ENCODE measurements at regions of chr3 and their contacts with region 1.

Region 1: DNA sequence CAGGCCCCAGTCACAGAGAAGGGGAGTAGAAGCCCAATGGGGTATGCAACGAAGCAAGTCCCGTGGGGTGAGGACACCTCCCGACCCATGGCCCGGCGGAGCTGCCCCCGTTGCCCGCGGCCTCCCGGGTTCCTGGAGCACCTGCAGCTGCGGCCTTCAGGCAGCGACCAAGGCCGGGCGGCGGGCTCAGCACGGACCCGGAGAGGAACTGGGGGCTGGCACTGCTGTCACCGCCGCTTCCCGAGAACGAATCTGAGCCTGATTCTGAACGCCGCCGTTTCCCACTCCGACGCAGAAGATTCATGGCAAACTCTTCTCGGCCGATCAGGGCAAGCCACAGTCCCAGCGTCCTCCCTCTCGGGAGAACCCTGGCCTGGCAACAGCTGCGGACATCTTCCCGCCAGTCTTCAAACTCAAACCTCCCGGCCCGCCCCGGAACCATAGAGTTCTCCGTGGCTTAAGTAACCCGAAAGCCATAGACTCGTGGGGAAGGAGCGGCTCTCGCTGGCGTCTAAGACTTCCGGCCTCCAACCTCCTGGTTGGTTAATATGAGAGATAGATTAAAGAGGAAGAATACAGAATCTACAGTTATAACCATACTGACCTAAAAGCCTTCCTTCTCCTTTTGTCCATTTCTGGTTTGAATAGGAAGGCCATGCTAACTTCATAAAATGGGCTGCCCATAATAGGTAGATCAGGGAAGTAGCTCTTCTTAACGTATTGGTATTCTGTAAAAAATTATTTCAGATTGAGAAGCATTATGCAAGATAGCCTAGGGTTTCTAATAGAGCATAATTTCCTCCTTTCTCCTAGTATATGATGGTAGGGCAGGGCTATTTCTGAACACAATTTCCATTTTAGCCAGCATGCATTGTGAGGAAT is at the start of gene POLQ:
- DNase-seq: peak; percentile 77
- ATAC-seq: peak; percentile 82
- H3K4me3 ChIP-seq: peak within 1 kb of the TSS; percentile 76
- H3K27ac ChIP-seq: peak within 1 kb of the TSS; percentile 84
- H3K4me1 ChIP-seq: peaks cover 16% of the 10 kb centered on the region
- H3K27me3 ChIP-seq: no peaks in the 10 kb centered on the region
- CTCF ChIP-seq: no peak
- EP300 ChIP-seq: 0 out of 4 replicates have a peak, but pooled peaks of 1 of the 2 experiments have one; percentile 18
- POLR2A ChIP-seq: peak; percentile 83
- RAD21 ChIP-seq: no peak
- polyA plus RNA-seq, gene POLQ: 3.3 to 3.4 TPM

Region 2: DNA sequence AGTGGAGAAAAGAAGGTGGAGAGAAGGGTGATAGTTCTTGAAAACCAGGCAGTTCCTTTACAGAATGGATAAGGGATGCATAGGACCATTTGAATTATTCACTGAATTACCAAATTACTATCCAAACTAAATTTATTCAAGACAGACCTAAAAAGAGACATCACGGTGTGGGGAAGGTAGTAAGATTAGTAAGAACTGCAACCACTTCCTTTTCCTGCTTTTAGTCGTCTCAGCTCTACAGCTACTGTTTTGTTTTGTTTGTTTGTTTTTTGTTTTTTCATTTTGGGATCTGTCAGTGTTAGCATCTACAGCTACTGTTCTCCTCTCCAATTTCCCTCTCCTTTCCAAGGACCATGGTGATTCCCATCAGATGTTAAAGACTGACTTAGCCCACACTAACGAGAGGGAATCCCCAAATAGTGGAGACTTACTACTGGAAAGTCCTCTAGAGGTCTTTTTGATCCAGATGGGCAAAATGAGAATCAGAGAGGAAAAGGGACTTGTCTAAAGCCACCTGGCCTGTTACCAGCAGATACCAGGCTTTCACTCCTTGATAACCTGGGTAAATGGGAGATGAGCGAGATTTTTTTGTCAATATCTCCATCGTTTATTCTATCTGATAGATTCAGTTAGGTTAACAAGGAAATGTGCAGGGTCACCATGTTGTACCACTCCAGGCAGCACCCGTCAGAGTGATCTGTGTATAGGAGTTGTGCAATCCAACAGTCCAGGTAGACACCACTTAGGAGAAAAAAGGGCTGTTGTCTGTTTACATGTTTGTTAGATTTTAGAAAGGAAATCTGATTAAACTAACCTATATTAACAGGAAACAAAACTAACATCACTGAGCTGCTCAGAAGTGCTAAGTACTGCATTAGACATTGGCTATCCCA is 108.9 kb after region 1 on chr3:
- CTCF ChIA-PET with region 1: interaction called, 5 read pairs
- POLR2A ChIA-PET with region 1: interaction called, 4 read pairs
- RAD21 ChIA-PET with region 1: interaction called, 3 read pairs
- SMC1A ChIA-PET with region 1: interaction called, 18 read pairs
- in situ Hi-C with region 1: no loop called
- intact Hi-C with region 1: loop called (anchors 2 kb)
- DNase-seq: peak; percentile 36
- ATAC-seq: peak; percentile 89
- H3K4me3 ChIP-seq: peak overlapping the region; percentile 12; the same call in 1 of the 2 replicates
- H3K27ac ChIP-seq: peak overlapping the region; percentile 68; the same call in 1 of the 2 replicates
- H3K4me1 ChIP-seq: peaks cover 34% of the 10 kb centered on the region
- H3K27me3 ChIP-seq: no peaks in the 10 kb centered on the region
- CTCF ChIP-seq: no peak
- EP300 ChIP-seq: 0 out of 4 replicates have a peak, but pooled peaks have one; percentile 16 to 21
- POLR2A ChIP-seq: no peak
- RAD21 ChIP-seq: no peak

Region 3: DNA sequence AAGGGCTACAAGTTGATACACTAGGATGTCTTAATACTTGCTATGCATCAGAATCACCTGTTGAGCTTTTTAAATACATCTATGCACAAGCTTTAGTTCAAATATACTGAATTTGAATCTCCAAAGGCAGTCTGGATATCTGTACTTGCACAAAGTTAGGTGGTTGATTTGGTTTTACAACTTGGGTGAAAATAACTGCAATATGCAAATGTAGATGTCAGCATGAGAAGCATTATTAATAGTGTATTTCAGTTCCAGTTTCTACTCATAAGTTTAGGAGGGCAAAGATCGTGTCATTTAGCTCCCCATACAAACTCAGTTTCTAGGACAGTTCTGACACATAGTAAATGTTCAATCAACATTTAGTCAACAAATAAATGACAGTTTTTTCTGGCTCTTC is 263.4 kb after region 1 on chr3:
- CTCF ChIA-PET with region 1: no interaction called
- POLR2A ChIA-PET with region 1: no interaction called
- RAD21 ChIA-PET with region 1: interaction called, 3 read pairs
- SMC1A ChIA-PET with region 1: interaction called, 4 read pairs
- in situ Hi-C with region 1: no loop called
- intact Hi-C with region 1: loop called (anchors 5 kb)
- DNase-seq: peak; percentile 84
- ATAC-seq: peak; percentile 99
- H3K4me3 ChIP-seq: no peak overlapping the region
- H3K27ac ChIP-seq: peak overlapping the region; percentile 81
- H3K4me1 ChIP-seq: peaks cover 26% of the 10 kb centered on the region
- H3K27me3 ChIP-seq: no peaks in the 10 kb centered on the region
- CTCF ChIP-seq: no peak
- EP300 ChIP-seq: peak; percentile 75 to 87
- POLR2A ChIP-seq: no peak
- RAD21 ChIP-seq: no peak

Region 4: DNA sequence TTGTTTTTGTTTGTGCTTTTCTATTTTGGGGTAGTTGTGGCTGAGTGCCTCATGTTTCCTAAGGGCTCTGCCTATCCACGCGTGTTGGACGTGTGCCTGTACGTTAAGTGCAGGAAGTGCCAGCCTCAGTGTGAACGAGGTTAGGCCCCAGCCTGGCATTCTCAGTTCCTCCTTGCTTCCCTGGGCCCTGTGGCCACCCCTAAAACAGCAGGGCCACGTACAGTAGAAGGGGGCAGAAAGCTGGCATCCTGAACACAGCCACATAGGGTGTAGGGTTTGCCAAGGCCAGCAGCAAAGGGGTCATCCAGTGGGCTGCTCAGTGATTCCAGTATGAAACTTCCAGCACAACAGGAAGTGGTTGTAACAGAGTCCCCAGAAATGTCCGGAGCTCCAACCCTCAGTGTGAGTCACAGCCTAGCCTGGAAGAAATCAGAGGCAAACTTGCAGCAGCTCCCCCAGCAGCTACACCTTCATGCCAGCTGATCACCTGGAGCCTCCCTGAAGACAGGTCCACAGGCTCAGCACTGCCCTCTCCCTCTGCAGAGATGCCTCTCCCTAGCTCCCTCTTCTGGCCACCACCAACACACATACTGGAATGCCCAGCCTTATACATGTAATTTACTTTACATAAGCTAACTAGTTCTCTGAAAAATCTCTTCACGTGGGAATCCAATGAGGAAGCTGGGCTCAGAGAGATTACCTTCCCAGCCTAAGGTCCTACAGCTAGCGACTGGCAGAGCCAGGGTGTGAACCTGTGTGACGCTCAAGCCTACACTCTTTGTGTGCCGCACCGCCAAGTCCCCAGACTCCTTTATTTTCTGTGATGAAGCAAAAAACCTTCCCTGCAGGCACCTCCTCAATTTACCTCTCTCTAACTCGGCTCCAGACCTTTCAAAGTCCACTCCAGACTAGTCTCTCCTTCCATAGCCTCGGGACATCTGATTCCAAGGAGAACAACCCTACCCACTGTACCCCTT is 449.6 kb after region 1 on chr3:
- CTCF ChIA-PET with region 1: interaction called, 13 read pairs
- POLR2A ChIA-PET with region 1: no interaction called
- RAD21 ChIA-PET with region 1: interaction called, 5 read pairs
- SMC1A ChIA-PET with region 1: interaction called, 9 read pairs
- in situ Hi-C with region 1: loop called (anchors 5 kb)
- intact Hi-C with region 1: loop called (anchors 5 kb)
- DNase-seq: peak; percentile 74
- ATAC-seq: peak; percentile 72
- H3K4me3 ChIP-seq: 0 out of 2 replicates have a peak overlapping the region, but pooled peaks have one; percentile 32
- H3K27ac ChIP-seq: peak overlapping the region; percentile 67
- H3K4me1 ChIP-seq: peaks cover 66% of the 10 kb centered on the region
- H3K27me3 ChIP-seq: no peaks in the 10 kb centered on the region
- CTCF ChIP-seq: peak; percentile 56 to 71 (median 59)
- EP300 ChIP-seq: no peak; a peak in 1 of 4 replicates
- POLR2A ChIP-seq: no peak
- RAD21 ChIP-seq: peak; percentile 59

Region 5: DNA sequence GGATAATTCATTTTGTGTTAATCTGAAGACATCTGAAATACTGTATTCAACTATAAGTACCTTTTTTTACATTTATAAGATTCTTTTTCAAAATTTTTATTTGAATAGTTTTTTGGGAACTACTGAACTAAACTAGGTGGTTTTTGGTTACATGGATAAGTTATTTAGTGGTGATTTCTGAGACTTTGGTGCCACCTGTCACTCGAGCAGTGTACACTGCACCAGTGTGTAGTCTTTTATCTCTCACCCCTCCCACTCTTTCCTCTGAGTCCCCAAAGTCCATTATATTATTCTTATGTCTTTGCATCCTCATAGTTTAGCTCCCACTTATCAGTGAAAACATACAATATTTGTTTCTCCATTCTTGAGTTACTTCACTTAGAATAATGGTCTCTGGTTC is 566.9 kb after region 1 on chr3:
- CTCF ChIA-PET with region 1: interaction called, 12 read pairs
- POLR2A ChIA-PET with region 1: no interaction called
- RAD21 ChIA-PET with region 1: interaction called, 9 read pairs
- SMC1A ChIA-PET with region 1: interaction called, 3 read pairs
- in situ Hi-C with region 1: no loop called
- intact Hi-C with region 1: no loop called
- DNase-seq: no peak
- ATAC-seq: peak; percentile 71; the same call in 2 of the 3 replicates
- H3K4me3 ChIP-seq: no peak overlapping the region
- H3K27ac ChIP-seq: no peak overlapping the region
- H3K4me1 ChIP-seq: peaks cover 8% of the 10 kb centered on the region; the same call in 1 of the 2 replicates
- H3K27me3 ChIP-seq: no peaks in the 10 kb centered on the region
- CTCF ChIP-seq: no peak
- EP300 ChIP-seq: no peak
- POLR2A ChIP-seq: no peak
- RAD21 ChIP-seq: no peak

Region 6: DNA sequence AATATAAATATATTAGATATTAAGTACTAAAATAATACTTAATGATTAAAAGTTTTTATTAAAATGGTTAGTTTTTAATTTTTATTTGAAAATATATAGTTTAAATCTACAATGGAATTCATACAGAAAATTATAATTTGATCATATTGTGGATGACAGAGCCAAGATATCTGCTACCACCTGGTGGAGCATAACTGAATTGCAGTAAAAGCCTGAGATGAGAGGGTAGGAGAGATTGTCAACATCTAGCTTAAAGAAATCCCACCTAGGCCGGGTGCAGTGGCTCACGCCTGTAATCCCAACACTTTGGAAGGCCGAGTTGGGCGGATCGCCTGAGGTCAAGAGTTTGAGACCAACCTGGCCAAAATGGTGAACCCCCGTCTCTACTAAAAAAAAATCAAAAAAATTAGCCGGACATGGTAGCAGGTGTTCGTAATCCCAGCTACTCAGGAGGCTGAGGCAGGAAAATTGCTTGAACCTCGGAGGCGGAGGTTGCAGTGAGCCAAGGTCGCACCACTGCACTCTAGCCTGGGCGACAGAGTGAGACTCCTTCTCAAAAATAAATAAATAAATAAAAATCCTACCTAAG is 754.2 kb after region 1 on chr3:
- CTCF ChIA-PET with region 1: interaction called, 20 read pairs
- POLR2A ChIA-PET with region 1: no interaction called
- RAD21 ChIA-PET with region 1: interaction called, 6 read pairs
- SMC1A ChIA-PET with region 1: no interaction called
- in situ Hi-C with region 1: no loop called
- intact Hi-C with region 1: loop called (anchors 2 kb)
- DNase-seq: no peak
- ATAC-seq: peak; percentile 23; the same call in 1 of the 3 replicates
- H3K4me3 ChIP-seq: no peak overlapping the region
- H3K27ac ChIP-seq: peak overlapping the region; percentile 86
- H3K4me1 ChIP-seq: peaks cover 53% of the 10 kb centered on the region
- H3K27me3 ChIP-seq: no peaks in the 10 kb centered on the region
- CTCF ChIP-seq: peak; percentile 52 to 59 (median 57)
- EP300 ChIP-seq: no peak
- POLR2A ChIP-seq: no peak
- RAD21 ChIP-seq: peak; percentile 84

Region 7: DNA sequence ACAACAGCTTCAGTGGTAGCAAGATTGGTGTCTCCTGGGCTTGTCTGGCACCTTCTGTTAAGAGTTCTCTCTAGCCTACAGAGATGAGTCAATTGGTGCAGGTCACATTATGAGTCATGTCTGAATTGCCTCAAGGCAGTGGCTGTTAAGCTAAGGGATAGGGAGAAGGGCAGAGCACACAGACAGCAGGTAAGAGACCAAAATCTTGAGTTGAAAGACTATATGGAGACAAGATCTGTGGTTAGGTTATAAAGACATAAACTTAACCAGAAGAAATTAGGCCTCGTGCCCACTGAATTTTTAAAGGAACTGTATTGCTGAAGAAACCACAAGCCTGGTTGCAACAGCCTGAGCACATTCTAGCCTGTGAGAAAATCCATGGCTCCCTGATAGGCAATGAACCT is 988.1 kb after region 1 on chr3:
- CTCF ChIA-PET with region 1: no interaction called
- POLR2A ChIA-PET with region 1: no interaction called
- RAD21 ChIA-PET with region 1: no interaction called
- SMC1A ChIA-PET with region 1: no interaction called
- in situ Hi-C with region 1: loop called (anchors 10 kb)
- intact Hi-C with region 1: no loop called
- DNase-seq: peak; percentile 79
- ATAC-seq: peak; percentile 100
- H3K4me3 ChIP-seq: no peak overlapping the region
- H3K27ac ChIP-seq: no peak overlapping the region; the same call in 1 of the 2 replicates
- H3K4me1 ChIP-seq: peaks cover 6% of the 10 kb centered on the region
- H3K27me3 ChIP-seq: no peaks in the 10 kb centered on the region
- CTCF ChIP-seq: no peak
- EP300 ChIP-seq: peak; percentile 67 to 90; a peak in 3 of 4 replicates
- POLR2A ChIP-seq: no peak
- RAD21 ChIP-seq: peak; percentile 26; the same call in 1 of the 2 replicates